PC-9 (cell line): ENCODE measurements at regions of chr22 and their contacts with region 1.

Region 1: DNA sequence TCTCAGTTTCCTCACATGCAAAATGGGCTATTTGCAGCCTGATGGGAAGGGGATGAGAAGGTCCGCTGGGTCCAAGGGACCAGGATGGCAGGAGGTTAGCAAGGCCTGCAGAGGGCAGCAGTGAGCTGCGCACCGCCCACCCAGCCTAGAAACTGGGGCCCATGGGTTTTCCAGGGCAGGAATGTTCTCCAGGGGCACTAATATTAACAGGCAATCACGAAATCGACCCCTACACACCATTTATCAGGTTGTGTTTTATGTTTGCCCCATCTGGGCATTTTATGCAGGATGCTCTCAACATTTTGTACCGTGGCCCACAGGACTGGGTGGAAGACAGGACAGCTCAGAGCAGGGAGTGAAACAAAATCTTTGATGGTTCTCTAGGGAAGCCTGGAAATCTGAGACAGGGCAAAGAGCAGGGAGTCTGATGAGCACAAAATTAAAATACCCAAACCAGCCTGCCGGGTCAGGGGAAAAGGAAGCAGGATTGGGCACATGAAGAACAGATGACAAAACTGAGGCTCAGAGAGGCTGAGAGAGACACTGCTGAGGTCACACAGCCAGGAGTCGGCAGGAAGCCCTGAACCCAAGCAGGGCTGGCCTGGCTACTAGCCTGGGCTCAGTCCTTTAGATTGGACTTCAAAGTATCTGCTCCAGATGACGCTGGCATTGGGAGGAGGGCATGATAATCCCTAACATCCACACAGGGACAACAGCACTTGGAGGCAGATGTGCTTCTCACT is 1.6 kb upstream of the BCR start:
- DNase-seq: peak in 1 of 2 experiments; percentile 51
- H3K4me3 ChIP-seq: no peak overlapping the region
- H3K27ac ChIP-seq: no peak overlapping the region
- H3K4me1 ChIP-seq: peaks cover 21% of the 10 kb centered on the region
- H3K27me3 ChIP-seq: no peaks in the 10 kb centered on the region
- CTCF ChIP-seq: peak; percentile 95

Region 2: DNA sequence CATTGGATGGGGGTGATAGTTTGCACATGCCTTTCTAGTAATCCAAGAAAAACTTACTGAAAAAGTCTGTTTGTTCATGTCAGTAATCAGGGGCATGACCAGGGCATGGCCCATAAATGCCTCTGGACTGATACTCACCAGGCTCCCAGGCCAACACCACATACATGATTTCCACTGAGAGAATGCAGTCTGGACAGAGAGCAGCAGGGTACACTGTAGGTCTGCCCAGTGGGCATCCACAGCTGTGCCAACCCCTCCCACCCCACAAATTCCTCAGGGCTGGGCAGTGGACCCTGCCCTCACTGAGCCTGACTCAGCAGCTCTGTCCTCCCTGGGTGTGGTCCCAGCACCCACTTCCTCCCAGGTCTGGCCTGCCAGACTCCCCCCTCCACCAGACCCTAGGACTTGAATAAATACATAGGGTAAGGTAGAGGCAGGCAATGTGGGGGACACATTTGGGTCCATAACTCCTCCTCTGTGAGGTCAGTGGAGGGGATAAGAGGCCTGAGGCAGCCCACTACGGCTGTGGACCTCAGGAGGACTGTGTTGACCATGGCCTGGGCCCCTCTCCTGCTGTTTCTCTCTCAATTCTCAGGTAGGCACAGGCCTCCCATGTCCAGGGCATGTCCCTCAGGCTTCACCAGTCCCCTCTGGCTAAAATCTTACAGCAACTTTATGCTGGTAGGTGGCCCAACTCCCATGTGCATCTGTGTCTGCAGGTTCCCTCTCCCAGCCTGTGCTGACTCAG is 1103.9 kb before region 1 on chr22:
- CTCF ChIA-PET with region 1: no interaction called
- POLR2A ChIA-PET with region 1: interaction called, 12 read pairs
- intact Hi-C with region 1: no loop called
- DNase-seq: peak in 1 of 2 experiments; percentile 43
- H3K4me3 ChIP-seq: no peak overlapping the region
- H3K27ac ChIP-seq: no peak overlapping the region
- H3K4me1 ChIP-seq: no peaks in the 10 kb centered on the region
- H3K27me3 ChIP-seq: no peaks in the 10 kb centered on the region
- CTCF ChIP-seq: no peak

Region 3: GRCh38 chr22:23156286-23156685 is 22.4 kb before region 1 on chr22:
- CTCF ChIA-PET with region 1: no interaction called
- POLR2A ChIA-PET with region 1: no interaction called
- intact Hi-C with region 1: no loop called
- DNase-seq: no peak
- H3K4me3 ChIP-seq: no peak overlapping the region
- H3K27ac ChIP-seq: no peak overlapping the region
- H3K4me1 ChIP-seq: peaks cover 20% of the 10 kb centered on the region; the same call in 1 of the 2 replicates
- H3K27me3 ChIP-seq: no peaks in the 10 kb centered on the region
- CTCF ChIP-seq: no peak

Region 4: DNA sequence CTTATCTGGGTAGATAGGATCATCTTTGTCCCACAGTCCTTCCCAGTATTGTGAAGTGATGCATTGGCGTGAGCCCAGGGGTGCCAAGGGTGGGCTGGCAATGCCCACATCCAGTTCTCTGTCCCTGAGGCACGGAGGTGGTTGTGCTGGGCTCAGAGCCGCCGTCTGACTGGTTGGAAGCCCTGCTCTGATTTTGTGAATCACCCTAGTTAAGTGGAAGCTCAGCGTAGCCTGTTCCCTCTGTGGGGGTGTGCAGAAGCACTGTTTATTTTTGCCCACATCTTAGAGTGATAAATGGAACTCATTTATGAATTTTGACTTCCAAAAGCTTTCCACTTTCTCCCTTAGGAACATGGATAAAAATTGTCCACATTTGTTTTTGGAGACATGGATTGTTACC is 15.2 kb after region 1 on chr22:
- CTCF ChIA-PET with region 1: no interaction called
- POLR2A ChIA-PET with region 1: interaction called, 19 read pairs
- intact Hi-C with region 1: no loop called
- DNase-seq: no peak
- H3K4me3 ChIP-seq: no peak overlapping the region
- H3K27ac ChIP-seq: no peak overlapping the region
- H3K4me1 ChIP-seq: peaks cover 19% of the 10 kb centered on the region
- H3K27me3 ChIP-seq: no peaks in the 10 kb centered on the region
- CTCF ChIP-seq: no peak

Region 5: GRCh38 chr22:23219822-23220484 is 41.3 kb after region 1 on chr22:
- CTCF ChIA-PET with region 1: no interaction called
- POLR2A ChIA-PET with region 1: interaction called, 3 read pairs
- intact Hi-C with region 1: loop called (anchors 2 kb)
- DNase-seq: peak in 1 of 2 experiments; percentile 33
- H3K4me3 ChIP-seq: no peak overlapping the region
- H3K27ac ChIP-seq: 0 out of 2 replicates have a peak overlapping the region, but pooled peaks have one; percentile 24
- H3K4me1 ChIP-seq: peaks cover 67% of the 10 kb centered on the region
- H3K27me3 ChIP-seq: no peaks in the 10 kb centered on the region
- CTCF ChIP-seq: no peak

Region 6: DNA sequence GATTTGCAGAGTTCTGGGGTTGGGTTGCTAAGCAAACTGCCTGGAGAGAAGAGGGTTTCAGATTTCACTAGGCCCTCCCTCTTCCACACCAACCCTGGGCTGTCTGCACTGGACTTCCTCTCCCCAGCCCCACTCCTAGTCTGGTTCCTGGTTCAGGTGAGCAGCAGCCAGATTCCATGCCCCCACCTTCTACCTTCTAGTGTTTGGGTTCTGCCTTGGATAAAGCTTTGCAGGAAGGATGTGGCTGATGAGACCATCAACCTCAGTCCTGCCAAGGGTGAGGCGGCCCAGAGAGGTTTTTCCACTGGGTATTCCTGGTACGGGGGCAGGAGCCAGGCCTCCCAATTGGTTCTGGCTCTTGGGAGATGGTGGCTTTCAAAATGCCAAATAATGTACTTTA is 69.9 kb after region 1 on chr22:
- CTCF ChIA-PET with region 1: no interaction called
- POLR2A ChIA-PET with region 1: no interaction called
- intact Hi-C with region 1: loop called (anchors 5 kb)
- DNase-seq: peak; percentile 57 to 71
- H3K4me3 ChIP-seq: no peak overlapping the region
- H3K27ac ChIP-seq: no peak overlapping the region
- H3K4me1 ChIP-seq: peaks cover 43% of the 10 kb centered on the region
- H3K27me3 ChIP-seq: no peaks in the 10 kb centered on the region
- CTCF ChIP-seq: no peak

Region 7: DNA sequence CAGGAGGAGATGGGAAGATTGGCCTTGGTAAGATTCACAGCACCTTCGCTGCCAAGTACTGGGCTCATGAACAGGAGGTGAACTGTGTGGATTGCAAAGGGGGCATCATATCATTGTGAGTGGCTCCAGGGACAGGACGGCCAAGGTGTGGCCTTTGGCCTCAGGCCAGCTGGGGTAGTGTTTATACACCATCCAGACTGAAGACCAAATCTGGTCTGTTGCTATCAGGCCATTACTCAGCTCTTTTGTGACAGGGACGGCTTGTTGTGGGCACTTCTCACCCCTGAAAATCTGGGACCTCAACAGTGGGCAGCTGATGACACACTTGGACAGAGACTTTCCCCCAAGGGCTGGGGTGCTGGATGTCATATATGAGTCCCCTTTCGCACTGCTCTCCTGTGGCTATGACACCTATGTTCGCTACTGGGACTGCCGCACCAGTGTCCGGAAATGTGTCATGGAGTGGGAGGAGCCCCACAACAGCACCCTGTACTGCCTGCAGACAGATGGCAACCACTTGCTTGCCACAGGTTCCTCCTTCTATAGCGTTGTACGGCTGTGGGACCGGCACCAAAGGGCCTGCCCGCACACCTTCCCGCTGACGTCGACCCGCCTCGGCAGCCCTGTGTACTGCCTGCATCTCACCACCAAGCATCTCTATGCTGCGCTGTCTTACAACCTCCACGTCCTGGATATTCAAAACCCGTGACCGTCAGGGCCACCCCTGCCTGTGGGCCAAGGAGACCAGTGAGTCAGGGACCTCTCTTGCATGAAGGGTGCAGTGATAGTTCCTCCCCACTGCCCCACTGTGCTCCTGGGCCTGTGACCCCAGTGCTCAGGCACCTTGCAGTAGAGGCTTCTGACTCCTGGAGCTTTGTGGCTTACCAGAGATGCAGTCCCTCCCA is 85.2 kb after region 1 on chr22:
- CTCF ChIA-PET with region 1: no interaction called
- POLR2A ChIA-PET with region 1: no interaction called
- intact Hi-C with region 1: loop called (anchors 5 kb)
- DNase-seq: no peak
- H3K4me3 ChIP-seq: no peak overlapping the region
- H3K27ac ChIP-seq: peak overlapping the region; percentile 27; the same call in 1 of the 2 replicates
- H3K4me1 ChIP-seq: 0 out of 2 replicates have a peak, but pooled peaks cover 5% of the 10 kb centered on the region
- H3K27me3 ChIP-seq: no peaks in the 10 kb centered on the region
- CTCF ChIP-seq: no peak

Region 8: GRCh38 chr22:23281406-23282088 is 102.9 kb after region 1 on chr22:
- CTCF ChIA-PET with region 1: interaction called, 21 read pairs
- POLR2A ChIA-PET with region 1: interaction called, 6 read pairs
- intact Hi-C with region 1: loop called (anchors 1 kb)
- DNase-seq: peak; percentile 53 to 79
- H3K4me3 ChIP-seq: no peak overlapping the region; the same call in 1 of the 2 replicates
- H3K27ac ChIP-seq: peak overlapping the region; percentile 63
- H3K4me1 ChIP-seq: peaks cover 18% of the 10 kb centered on the region
- H3K27me3 ChIP-seq: no peaks in the 10 kb centered on the region
- CTCF ChIP-seq: peak; percentile 94